Right cardiac atrium (tissue), 5 donors: ENCODE measurements at regions of chr5 and their contacts with region 1.

Region 1: GRCh38 chr5:123807177-123807945 is 295.4 kb downstream of the CSNK1G3 start:
- DNase-seq: peak in 1 of 3 donors; percentile 30
- ATAC-seq: peak; percentile 77 to 78
- H3K4me3 ChIP-seq: no peak overlapping the region
- H3K27ac ChIP-seq: peak overlapping the region; percentile 61
- H3K4me1 ChIP-seq: peaks cover 8% of the 10 kb centered on the region
- H3K27me3 ChIP-seq: no peaks in the 10 kb centered on the region

Region 2: DNA sequence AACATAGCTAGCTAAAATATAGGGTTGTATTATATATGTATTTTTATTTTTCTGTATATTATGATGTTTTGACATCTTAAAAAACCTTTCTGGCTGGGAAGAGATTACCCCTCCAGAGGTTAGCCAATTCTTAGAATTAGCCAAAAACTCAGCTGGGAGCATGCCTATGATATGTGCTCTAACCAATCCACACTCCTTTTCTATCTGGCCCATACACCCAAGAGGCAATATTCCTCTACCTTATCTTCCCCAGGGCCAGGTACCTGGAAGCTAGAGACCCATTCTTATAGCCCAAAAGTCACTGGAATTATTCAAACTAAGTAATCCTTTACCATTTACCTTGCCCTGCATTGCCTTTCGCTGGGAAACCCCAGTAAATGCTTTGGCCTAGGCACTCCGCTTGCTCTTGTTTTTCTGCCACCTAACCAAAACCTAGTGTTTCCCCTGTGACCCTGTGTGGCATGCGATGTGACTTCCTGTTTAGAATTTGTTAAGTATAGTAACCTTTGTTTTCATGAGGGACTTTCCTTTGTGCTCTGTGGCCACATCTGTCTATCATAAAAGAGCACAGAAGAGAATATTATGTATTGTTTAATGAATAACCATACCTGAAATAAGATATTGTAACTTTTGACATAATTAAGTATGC is 258.0 kb before region 1 on chr5:
- intact Hi-C with region 1: no loop called
- DNase-seq: no peak
- ATAC-seq: no peak
- H3K4me3 ChIP-seq: no peak overlapping the region
- H3K27ac ChIP-seq: no peak overlapping the region
- H3K4me1 ChIP-seq: no peaks in the 10 kb centered on the region
- H3K27me3 ChIP-seq: no peaks in the 10 kb centered on the region

Region 3: GRCh38 chr5:123671042-123671441 is 136.3 kb before region 1 on chr5:
- intact Hi-C with region 1: no loop called
- DNase-seq: peak in 2 of 3 donors; percentile 20 to 59
- ATAC-seq: no peak
- H3K4me3 ChIP-seq: no peak overlapping the region
- H3K27ac ChIP-seq: no peak overlapping the region
- H3K4me1 ChIP-seq: peaks cover 3% of the 10 kb centered on the region
- H3K27me3 ChIP-seq: no peaks in the 10 kb centered on the region

Region 4: DNA sequence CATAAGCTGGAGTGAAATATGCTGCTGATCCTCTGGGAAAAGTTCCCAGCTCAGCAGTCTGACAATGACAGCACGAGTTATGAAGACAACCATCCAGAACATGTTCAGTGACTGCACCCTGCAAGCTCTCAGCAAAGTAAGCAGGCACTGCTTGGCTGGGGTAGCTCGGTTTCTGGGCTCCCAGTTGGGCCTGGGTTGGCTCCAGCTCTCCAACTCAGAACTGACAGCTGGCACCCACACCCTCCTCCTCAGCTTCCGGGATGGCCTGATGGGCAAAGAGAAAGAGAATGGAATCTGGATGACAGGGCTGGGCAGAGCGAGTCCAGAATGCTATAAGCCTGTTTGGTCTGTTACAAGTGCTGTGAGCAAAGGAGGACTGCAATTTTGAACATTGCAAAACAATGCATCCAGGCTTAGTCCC is 110.4 kb before region 1 on chr5:
- intact Hi-C with region 1: loop called in 1 of 4 experiments (anchors 5 kb)
- DNase-seq: peak; percentile 61 to 84 (median 83)
- ATAC-seq: peak; percentile 87 to 96
- H3K4me3 ChIP-seq: no peak overlapping the region
- H3K27ac ChIP-seq: peak overlapping the region; percentile 11
- H3K4me1 ChIP-seq: peaks cover 3% of the 10 kb centered on the region
- H3K27me3 ChIP-seq: no peaks in the 10 kb centered on the region

Region 5: DNA sequence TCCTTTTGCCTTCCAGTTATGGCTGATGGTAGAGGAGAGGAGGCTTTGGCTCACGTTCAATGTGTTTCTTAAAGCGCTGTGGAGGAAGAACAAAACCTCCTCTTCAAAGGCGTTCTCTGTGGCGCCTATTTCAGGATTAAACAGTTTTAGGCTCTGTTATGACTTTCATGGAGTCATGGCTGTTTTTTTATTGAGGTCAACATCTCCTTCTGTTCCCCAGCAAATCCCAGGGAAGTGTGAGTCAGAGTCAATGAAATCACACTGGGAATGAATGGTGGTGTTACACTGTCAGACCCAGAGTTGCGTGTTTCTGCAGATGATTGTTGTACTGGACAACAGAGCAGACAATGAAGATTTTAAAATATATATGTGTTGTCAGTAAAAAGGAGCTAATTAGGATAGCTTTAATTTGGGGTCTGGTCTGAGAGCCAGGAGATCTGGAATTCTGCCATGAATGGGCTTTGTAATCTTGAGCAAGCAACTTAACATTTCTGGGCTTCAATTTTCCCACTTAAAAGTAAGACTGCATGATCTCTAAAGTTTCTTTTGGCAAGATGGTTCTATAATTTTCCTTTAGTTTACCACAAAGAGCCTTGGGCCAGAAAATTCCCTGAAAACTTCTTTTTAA is 54.7 kb before region 1 on chr5:
- intact Hi-C with region 1: loop called in 1 of 4 experiments (anchors 10 kb)
- DNase-seq: no peak
- ATAC-seq: peak; percentile 90 to 91
- H3K4me3 ChIP-seq: no peak overlapping the region
- H3K27ac ChIP-seq: no peak overlapping the region
- H3K4me1 ChIP-seq: no peaks in the 10 kb centered on the region
- H3K27me3 ChIP-seq: no peaks in the 10 kb centered on the region

Region 6: GRCh38 chr5:124034963-124035362 is 227.6 kb after region 1 on chr5:
- intact Hi-C with region 1: no loop called
- DNase-seq: no peak
- ATAC-seq: no peak
- H3K4me3 ChIP-seq: no peak overlapping the region
- H3K27ac ChIP-seq: no peak overlapping the region
- H3K4me1 ChIP-seq: no peaks in the 10 kb centered on the region
- H3K27me3 ChIP-seq: no peaks in the 10 kb centered on the region

Region 7: GRCh38 chr5:124080256-124080655 is 272.9 kb after region 1 on chr5:
- intact Hi-C with region 1: no loop called
- DNase-seq: no peak
- ATAC-seq: no peak
- H3K4me3 ChIP-seq: no peak overlapping the region
- H3K27ac ChIP-seq: no peak overlapping the region
- H3K4me1 ChIP-seq: no peaks in the 10 kb centered on the region
- H3K27me3 ChIP-seq: no peaks in the 10 kb centered on the region